Activated CD8-positive, alpha-beta T cell treated with anti-CD3 and anti-CD28 coated beads, Interleukin-2, amount 10 ng/mL, durations not matched to agents 7 days and 5 days (primary cell): ENCODE measurements at regions of chr6 and their contacts with region 1.

Region 1: GRCh38 chr6:113920663-113921267 is 50.2 kb downstream of the HDAC2 start:
- DNase-seq: peak; percentile 46
- ATAC-seq: peak; percentile 72
- H3K4me3 Mint-ChIP-seq: peak overlapping the region; percentile 7
- H3K27ac Mint-ChIP-seq: peak overlapping the region; percentile 77
- H3K4me1 Mint-ChIP-seq: peaks cover 14% of the 10 kb centered on the region
- H3K27me3 Mint-ChIP-seq: peaks cover 8% of the 10 kb centered on the region

Region 2: GRCh38 chr6:113672491-113673149 is 248.1 kb before region 1 on chr6:
- CTCF ChIA-PET with region 1: no interaction called
- POLR2A ChIA-PET with region 1: no interaction called
- DNase-seq: no peak
- ATAC-seq: no peak
- H3K4me3 Mint-ChIP-seq: no peak overlapping the region
- H3K27ac Mint-ChIP-seq: no peak overlapping the region
- H3K4me1 Mint-ChIP-seq: no peaks in the 10 kb centered on the region
- H3K27me3 Mint-ChIP-seq: peaks cover 2% of the 10 kb centered on the region

Region 3: GRCh38 chr6:113796038-113796437 is 124.7 kb before region 1 on chr6:
- CTCF ChIA-PET with region 1: no interaction called
- POLR2A ChIA-PET with region 1: no interaction called
- DNase-seq: no peak
- ATAC-seq: no peak
- H3K4me3 Mint-ChIP-seq: no peak overlapping the region
- H3K27ac Mint-ChIP-seq: no peak overlapping the region
- H3K4me1 Mint-ChIP-seq: peaks cover 3% of the 10 kb centered on the region
- H3K27me3 Mint-ChIP-seq: peaks cover 4% of the 10 kb centered on the region

Region 4: DNA sequence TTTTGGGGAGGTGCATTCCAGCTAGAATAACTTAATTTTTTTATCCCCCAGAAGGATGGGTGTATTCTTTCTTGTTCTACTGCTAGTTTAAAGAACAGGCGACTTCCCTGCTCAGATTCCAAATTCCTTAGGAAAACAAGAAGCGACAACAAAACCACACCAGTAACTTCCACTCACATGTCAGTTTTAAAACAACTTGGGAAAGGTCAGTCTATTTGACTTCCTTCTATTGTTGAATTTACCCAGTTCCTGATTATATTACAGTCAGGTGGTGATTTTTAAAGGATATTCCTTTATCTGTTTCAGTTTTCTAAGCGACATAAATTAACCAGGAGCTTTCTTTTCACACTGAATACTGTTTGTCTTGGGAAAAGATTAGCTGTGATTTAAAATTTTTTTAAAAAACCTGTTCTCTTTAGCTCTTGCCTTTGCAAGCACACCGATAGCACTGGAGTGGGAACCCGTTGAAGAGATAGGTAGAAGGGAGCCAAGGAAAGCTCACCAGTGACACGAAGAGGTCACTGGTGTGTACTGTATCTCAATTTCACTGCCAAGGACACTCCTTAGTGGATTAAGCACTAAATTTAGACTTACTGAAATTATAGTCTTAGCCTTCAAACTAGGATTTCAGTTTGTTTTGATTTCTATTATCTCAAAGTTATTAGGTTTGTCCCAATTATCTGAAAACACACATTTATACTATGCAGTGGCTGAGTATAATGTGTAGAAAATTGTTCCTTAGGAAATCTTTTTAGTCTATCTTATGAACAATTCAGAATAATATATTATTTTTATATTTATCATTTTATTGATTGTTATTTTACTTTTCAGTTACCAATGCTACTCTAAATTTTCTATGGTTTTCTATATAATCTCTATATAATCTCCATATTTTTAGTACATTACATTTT is 41.3 kb before region 1 on chr6:
- CTCF ChIA-PET with region 1: no interaction called
- POLR2A ChIA-PET with region 1: no interaction called
- DNase-seq: no peak
- ATAC-seq: peak; percentile 84
- H3K4me3 Mint-ChIP-seq: no peak overlapping the region
- H3K27ac Mint-ChIP-seq: no peak overlapping the region
- H3K4me1 Mint-ChIP-seq: no peaks in the 10 kb centered on the region
- H3K27me3 Mint-ChIP-seq: peaks cover 33% of the 10 kb centered on the region

Region 5: GRCh38 chr6:113909234-113909856 is 11.4 kb before region 1 on chr6:
- CTCF ChIA-PET with region 1: interaction called, 29 read pairs
- POLR2A ChIA-PET with region 1: no interaction called
- DNase-seq: peak; percentile 34
- ATAC-seq: no peak
- H3K4me3 Mint-ChIP-seq: no peak overlapping the region
- H3K27ac Mint-ChIP-seq: no peak overlapping the region
- H3K4me1 Mint-ChIP-seq: no peaks in the 10 kb centered on the region
- H3K27me3 Mint-ChIP-seq: peaks cover 6% of the 10 kb centered on the region